Left ventricle myocardium inferior (tissue), 1 donor: ENCODE measurements at regions of chr11 and their contacts with region 1.

Region 1: DNA sequence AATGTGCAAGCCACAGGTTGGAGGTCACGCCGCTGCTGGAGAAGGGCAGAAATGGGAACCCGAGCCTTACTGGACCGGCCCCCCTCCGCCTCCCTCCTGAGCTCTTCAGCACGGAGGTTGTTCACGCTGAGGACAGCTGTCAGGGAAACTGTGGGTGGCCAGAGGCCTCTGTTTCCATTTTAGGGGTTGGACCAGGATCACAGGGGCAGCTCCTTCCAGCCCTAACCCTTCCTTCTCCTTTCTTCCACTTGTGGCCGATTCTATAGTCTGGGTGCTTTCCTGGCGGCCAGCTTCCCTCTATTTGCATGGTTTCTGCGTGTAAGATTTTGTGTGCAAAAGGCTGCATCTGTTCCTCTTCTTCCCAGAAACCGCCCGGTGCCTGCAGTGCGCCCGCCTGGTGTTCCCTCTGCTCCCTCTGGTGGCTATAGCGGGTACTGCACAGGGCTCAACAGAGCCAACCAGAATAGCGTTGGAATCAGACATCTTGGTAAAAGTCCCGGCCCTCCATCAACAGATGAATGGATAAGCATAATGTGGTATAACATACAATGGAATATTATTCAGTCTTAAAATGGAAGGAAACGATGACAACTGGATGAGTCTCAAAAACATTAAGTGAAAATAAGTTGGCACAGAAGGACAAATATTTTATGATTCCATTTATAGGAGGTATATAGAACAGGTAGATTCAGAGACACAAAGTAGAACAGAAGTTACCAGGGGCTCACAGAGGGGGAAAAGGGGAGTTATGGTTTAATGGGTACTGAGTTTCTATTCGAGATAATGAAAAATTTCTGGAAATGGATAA is 8.4 kb upstream of the SLC22A8 start:
- DNase-seq: peak; percentile 87
- H3K4me3 ChIP-seq: no peak overlapping the region
- H3K27ac ChIP-seq: no peak overlapping the region
- H3K4me1 ChIP-seq: peaks cover 7% of the 10 kb centered on the region
- H3K27me3 ChIP-seq: peaks cover 28% of the 10 kb centered on the region
- CTCF ChIP-seq: peak; percentile 100

Region 2: GRCh38 chr11:62905927-62906531 is 118.0 kb before region 1 on chr11:
- intact Hi-C with region 1: loop called (anchors 5 kb)
- DNase-seq: peak; percentile 72
- H3K4me3 ChIP-seq: no peak overlapping the region
- H3K27ac ChIP-seq: no peak overlapping the region
- H3K4me1 ChIP-seq: peaks cover 38% of the 10 kb centered on the region
- H3K27me3 ChIP-seq: no peaks in the 10 kb centered on the region
- CTCF ChIP-seq: peak; percentile 100